Dendritic cell treated with granulocyte-macrophage colony-stimulating factor and Interleukin-4, amounts not matched to agents 40 ng/mL and 50 ng/mL, for 4 days (primary cell): ENCODE measurements at regions of chr3 and their contacts with region 1.

Region 1: DNA sequence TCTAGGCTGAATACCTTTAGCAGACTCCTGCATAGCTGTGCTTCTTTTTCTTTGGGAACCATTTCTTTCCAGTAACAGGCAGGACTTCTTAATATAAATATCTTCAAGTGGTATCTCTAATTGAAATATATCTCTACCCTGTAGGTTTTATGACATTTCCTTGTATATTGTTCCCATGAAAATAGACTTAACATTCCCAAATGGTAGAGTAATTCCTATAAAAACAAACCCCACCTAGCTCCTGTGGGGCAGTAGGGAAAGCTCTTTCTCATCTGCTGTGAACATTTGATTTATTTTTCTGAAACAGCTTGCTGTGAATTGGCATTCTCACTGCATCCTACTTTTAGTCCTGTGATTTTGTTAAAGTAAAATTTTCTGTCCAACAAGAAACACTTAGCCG is 20.8 kb downstream of the SELENOT start:
- H3K4me3 Mint-ChIP-seq: no peak overlapping the region
- H3K27ac Mint-ChIP-seq: no peak overlapping the region
- H3K4me1 Mint-ChIP-seq: peaks cover 15% of the 10 kb centered on the region
- H3K27me3 Mint-ChIP-seq: no peaks in the 10 kb centered on the region

Region 2: DNA sequence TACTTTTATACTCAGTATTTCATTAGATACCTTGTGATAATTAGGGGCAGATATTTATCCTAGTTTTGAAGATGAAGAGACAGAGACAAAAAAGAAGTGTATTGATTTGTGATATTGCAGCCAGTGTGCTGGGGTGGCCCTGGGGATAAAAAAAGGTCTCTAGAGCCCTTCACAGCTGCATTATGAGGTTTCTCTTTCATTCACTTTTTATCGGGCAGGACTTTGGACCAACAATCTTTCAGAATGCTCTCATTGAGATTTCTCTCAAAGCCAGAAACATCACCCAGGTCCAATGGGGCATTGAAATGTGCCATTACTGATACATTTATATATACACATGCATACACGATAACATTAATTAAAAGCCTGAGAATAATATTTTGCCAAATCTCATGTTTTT is 41.3 kb before region 1 on chr3:
- intact Hi-C with region 1: loop called (anchors 5 kb)
- H3K4me3 Mint-ChIP-seq: no peak overlapping the region
- H3K27ac Mint-ChIP-seq: no peak overlapping the region
- H3K4me1 Mint-ChIP-seq: no peaks in the 10 kb centered on the region
- H3K27me3 Mint-ChIP-seq: no peaks in the 10 kb centered on the region

Region 3: DNA sequence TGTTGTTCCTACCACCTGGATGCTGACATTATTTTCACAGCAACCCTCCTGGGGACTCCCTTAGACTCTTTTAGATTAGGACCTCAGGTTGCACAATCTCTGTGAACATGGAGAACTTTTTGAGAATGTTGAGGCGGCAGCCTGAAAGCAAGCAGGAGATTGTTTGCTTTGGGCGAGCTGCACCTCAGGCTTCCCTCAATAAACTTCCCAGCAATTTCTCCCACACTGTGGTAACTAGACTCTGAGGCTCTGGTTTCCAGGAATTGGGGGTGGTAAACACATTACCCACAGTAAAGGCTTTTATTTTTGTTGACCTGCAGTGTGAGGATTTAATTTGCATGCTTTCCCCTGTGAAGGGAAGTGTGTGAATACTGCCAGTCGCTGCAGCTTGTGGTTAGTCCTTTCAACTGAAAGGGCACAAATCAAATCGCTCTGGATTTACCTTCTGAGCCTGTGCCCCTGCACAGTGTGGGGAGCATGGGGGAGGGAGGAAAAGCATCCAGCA is 174.2 kb after region 1 on chr3:
- intact Hi-C with region 1: no loop called
- H3K4me3 Mint-ChIP-seq: no peak overlapping the region
- H3K27ac Mint-ChIP-seq: no peak overlapping the region
- H3K4me1 Mint-ChIP-seq: peaks cover 12% of the 10 kb centered on the region
- H3K27me3 Mint-ChIP-seq: no peaks in the 10 kb centered on the region